Heart right ventricle (tissue), 16 donors: ENCODE measurements at regions of chr2 and their contacts with region 1.

Region 1: GRCh38 chr2:119311356-119311755 is 55.3 kb downstream of the C2orf76 start:
- DNase-seq: no peak
- ATAC-seq: peak in 1 of 8 donors; percentile 6
- H3K4me3 ChIP-seq: no peak overlapping the region
- H3K27ac ChIP-seq: no peak overlapping the region
- H3K4me1 ChIP-seq: peaks cover 0 to 34% (median 16%) of the 10 kb centered on the region in 9 donors
- H3K27me3 ChIP-seq: no peaks in the 10 kb centered on the region
- CTCF ChIP-seq: no peak

Region 2: DNA sequence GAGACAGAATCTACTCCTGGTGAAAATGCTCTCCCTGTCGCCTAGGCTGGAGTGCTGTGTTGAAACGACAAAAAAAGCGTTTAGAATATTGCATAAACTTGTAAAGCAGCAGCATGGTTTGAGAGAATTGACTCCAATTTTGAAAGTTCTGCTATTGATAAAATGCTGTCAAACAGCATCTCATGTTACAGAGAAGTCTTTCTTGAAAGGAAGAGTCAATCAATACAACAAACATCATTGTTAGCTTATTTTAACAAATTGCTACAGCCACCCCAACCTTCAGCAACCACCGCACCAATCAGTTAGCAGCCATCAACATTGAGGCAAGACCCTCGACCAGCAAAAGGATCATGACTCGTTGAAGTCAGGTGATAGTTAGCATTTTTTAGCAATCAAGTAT is 48.4 kb after region 1 on chr2:
- intact Hi-C with region 1: loop called in 2 of 10 experiments (anchors 5 to 10 kb)
- DNase-seq: no peak
- ATAC-seq: no peak
- H3K4me3 ChIP-seq: no peak overlapping the region
- H3K27ac ChIP-seq: peak overlapping the region in 1 of 10 donors; percentile 0
- H3K4me1 ChIP-seq: peaks cover 0 to 52% (median 18%) of the 10 kb centered on the region in 9 donors
- H3K27me3 ChIP-seq: no peaks in the 10 kb centered on the region
- CTCF ChIP-seq: no peak

Region 3: DNA sequence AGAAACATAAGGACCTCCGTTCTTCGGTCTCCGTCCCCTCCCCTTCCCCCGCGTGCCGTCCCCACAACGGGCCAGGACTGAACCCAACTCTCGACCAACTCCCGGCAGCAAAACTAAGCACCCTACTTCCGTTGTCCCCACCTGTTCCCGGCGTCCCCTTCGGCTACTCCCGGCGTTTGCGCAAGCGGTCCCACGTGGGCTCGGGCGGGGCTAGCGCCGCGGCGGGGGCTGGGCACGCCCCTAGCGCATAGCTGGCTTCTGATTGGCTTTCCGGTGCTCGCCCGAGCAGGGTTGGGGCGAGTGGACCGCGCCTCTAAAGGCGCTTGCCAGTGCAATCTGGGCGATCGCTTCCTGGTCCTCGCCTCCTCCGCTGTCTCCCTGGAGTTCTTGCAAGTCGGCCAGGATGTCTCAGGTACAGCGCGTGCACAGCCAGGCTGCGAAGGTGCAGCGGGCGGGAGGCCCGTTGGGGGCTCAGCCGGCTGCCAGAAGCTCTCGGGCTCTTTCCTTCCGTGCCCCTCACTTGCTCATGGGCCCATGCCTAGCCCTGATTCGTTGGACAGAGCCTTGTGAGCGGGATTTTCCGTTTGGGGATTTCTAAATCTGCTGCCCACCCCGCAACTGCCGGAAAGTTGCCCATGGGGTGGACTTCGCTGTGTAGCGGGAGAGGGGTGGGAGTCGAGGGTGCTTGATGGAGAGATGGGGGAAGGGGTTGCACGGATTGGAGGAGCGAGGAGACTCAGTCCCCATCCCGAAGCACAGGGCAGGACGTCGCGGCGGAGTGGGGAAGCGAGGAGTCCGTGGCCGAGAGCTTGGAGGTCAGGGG is 55.5 kb after region 1 on chr2 and contains the starts of genes C2orf76 and DBI:
- intact Hi-C with region 1: loop called in 6 of 10 experiments (anchors 2 to 10 kb)
- DNase-seq: peak; percentile 95 to 96
- ATAC-seq: peak; percentile 97 to 98 (median 98)
- H3K4me3 ChIP-seq: peak within 1 kb of the TSS; percentile 43 to 93 (median 72)
- H3K27ac ChIP-seq: peak within 1 kb of the TSS; percentile 73 to 96 (median 91)
- H3K4me1 ChIP-seq: peaks cover 9 to 70% (median 52%) of the 10 kb centered on the region in 9 donors
- H3K27me3 ChIP-seq: no peaks in the 10 kb centered on the region
- CTCF ChIP-seq: no peak
- total RNA-seq, gene C2orf76: 5.1 to 9.9 (median 8.2) TPM
- total RNA-seq, gene DBI: 195 to 383 (median 253) TPM

Region 4: GRCh38 chr2:119476301-119477021 is 165.1 kb after region 1 on chr2:
- intact Hi-C with region 1: loop called in 5 of 10 experiments (anchors 5 to 10 kb)
- DNase-seq: peak in 1 of 2 donors; percentile 52
- ATAC-seq: peak; percentile 57 to 78 (median 72)
- H3K4me3 ChIP-seq: peak overlapping the region in 2 of 10 donors; percentile 20
- H3K27ac ChIP-seq: peak overlapping the region in 5 of 10 donors; percentile 28 to 73 (median 44)
- H3K4me1 ChIP-seq: peaks cover 0 to 39% (median 18%) of the 10 kb centered on the region in 9 donors
- H3K27me3 ChIP-seq: peaks cover 0 to 6% (median 0%) of the 10 kb centered on the region in 7 donors
- CTCF ChIP-seq: peak; percentile 89 to 98 (median 96)

Region 5: DNA sequence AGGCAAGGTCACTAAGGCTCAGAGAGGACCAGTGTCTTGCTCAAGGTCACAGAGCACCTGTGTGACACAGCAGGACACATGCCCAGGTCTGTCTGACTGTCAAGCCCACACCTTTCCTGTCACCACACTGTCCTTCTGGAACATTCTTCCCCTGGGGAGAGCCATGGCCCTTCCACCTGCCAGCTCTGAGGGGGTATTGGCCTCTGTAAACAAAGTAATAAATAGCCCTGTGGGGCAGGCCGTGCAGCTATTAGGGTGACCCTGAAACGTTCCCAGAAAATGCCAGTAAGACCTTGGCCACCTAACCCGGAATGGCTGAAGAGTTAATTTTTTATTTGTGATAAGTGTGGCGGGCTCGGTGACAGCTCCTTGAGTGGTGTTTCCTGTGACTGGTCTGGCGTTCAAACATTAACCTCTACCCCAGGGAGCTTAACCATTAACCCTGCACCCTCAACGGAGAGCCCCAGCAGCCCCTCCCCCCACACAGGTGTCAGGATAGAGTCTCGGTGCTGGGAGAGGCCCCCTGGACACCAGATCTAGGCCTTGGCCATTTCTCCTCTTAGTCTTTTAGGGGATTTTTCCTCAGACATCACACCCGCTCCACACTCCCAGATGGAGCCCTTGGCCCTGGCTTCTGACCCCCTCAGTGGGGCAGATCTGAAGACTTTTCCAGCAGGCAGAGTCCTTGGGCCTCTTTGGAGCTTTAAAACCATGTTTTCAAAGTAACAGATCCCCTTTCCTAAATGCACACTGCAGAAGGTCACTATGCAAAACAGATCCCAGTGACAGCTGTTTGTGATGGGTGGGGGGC is 176.3 kb after region 1 on chr2:
- intact Hi-C with region 1: loop called in 1 of 10 experiments (anchors 10 kb)
- DNase-seq: no peak
- ATAC-seq: peak in 1 of 8 donors; percentile 19
- H3K4me3 ChIP-seq: no peak overlapping the region
- H3K27ac ChIP-seq: peak overlapping the region; percentile 42 to 89 (median 74)
- H3K4me1 ChIP-seq: peaks cover 7 to 98% (median 59%) of the 10 kb centered on the region in 9 donors
- H3K27me3 ChIP-seq: peaks cover 0 to 3% (median 0%) of the 10 kb centered on the region in 7 donors
- CTCF ChIP-seq: no peak